Activated CD4-positive, alpha-beta T cell treated with anti-CD3 and anti-CD28 coated beads for 36 hours (primary cell): ENCODE measurements at regions of chr10 and their contacts with region 1.

Region 1: DNA sequence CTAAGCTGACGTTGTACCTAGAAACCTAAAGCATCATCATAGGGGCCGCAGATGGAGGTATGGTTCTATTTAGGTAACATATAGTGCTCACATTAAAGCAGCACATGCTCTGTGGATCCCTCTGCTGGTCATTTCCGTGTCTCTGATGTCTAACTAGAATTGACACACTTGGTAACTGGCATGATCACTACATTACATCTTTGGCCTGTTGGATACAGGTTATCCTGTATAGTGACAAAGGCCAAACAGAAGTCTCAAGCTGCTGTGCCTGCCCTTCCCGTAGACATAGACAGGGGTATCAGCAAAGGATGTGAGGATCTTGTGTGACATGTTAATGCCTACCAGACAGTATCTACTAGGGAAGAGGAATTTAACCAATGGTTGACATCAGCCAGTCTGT is 51.2 kb downstream of the KIF5B start:
- DNase-seq: peak; percentile 66
- ATAC-seq: peak; percentile 69
- H3K4me3 Mint-ChIP-seq: no peak overlapping the region
- H3K27ac Mint-ChIP-seq: peak overlapping the region; percentile 38
- H3K4me1 Mint-ChIP-seq: peaks cover 11% of the 10 kb centered on the region
- H3K27me3 Mint-ChIP-seq: no peaks in the 10 kb centered on the region

Region 2: DNA sequence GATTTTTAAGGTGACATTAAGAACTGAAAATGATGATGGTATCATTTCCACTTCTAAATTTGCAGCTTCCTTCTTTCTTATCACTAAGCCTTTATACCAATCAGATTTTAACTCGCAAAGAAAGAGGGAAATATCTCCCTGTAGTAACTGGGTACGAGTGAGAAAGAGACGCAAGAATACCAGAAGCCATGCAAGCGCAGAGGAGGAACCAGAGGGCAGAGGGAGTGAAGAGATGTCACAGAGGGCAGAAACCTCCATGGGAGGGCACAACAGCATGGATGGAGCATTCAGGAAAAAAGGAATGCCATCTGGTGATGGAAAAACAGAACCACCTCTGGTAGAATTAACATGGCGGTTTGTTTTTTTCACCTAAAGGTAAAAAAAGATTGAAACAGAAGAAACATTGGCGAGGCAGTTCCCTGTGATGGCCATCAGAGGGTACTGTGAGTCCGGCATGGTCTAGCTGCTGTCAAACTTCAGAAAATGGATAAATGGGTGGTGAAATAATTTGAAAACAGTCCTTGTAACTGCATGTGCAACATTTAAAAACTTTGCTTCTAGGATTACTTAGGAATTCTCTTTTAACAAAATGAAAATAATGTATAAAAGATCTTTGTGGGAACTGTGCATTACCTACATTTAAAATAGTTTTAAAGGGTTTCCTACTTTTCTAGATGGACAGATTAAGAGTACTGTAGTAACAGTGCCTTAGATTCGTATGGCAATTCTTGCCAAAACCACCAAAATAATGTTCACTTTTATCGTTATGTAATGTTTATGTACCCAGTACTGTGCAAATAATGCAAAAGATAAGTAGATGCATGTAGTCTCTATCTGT is 168.3 kb before region 1 on chr10:
- CTCF ChIA-PET with region 1: no interaction called
- POLR2A ChIA-PET with region 1: no interaction called
- intact Hi-C with region 1: loop called in 1 of 2 experiments (anchors 2 kb)
- DNase-seq: peak; percentile 31
- ATAC-seq: peak; percentile 57
- H3K4me3 Mint-ChIP-seq: no peak overlapping the region
- H3K27ac Mint-ChIP-seq: no peak overlapping the region
- H3K4me1 Mint-ChIP-seq: peaks cover 14% of the 10 kb centered on the region
- H3K27me3 Mint-ChIP-seq: no peaks in the 10 kb centered on the region